SK-N-SH (cell line): ENCODE measurements at regions of chr19 and their contacts with region 1.

Region 1: DNA sequence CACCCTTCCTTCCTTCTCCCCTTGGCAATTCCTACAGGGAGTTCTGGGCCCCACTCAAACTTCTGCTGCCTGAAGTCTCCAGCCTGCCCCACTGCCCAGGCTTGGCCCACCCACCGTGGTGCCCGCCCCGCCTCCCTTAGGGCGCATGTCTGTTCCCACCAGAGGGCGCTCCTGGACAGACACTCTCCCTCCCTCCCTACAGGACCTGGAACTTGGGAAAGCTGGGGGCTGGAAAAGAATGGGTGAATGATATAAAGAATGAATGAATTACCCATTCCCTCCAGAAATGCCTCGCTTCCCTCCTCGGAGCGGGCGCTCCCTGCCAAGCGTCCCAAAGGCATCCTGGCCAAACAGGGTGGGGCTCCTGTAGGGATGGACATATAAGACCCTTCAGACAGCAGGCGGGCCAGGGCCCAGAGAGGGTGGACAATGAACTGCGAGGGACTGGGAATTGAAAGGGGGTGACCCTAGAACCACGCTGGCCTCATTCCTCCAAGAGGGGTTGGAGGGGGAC is 5.3 kb upstream of the EMP3 start:
- DNase-seq: peak; percentile 67
- H3K4me3 ChIP-seq: no peak overlapping the region; a peak in 1 of 4 replicates
- H3K27ac ChIP-seq: no peak overlapping the region
- H3K4me1 ChIP-seq: peaks cover 12 to 24% of the 10 kb centered on the region in 2 experiments
- H3K27me3 ChIP-seq: no peaks in the 10 kb centered on the region
- CTCF ChIP-seq: peak; percentile 73
- EP300 ChIP-seq: no peak
- RAD21 ChIP-seq: peak; percentile 59

Region 2: GRCh38 chr19:48218997-48219396 is 101.1 kb before region 1 on chr19:
- CTCF ChIA-PET with region 1: no interaction called
- POLR2A ChIA-PET with region 1: no interaction called
- DNase-seq: no peak
- H3K4me3 ChIP-seq: no peak overlapping the region
- H3K27ac ChIP-seq: no peak overlapping the region
- H3K4me1 ChIP-seq: no peaks in the 10 kb centered on the region; a peak in 1 of 4 replicates
- H3K27me3 ChIP-seq: no peaks in the 10 kb centered on the region
- CTCF ChIP-seq: no peak
- EP300 ChIP-seq: no peak
- RAD21 ChIP-seq: no peak

Region 3: DNA sequence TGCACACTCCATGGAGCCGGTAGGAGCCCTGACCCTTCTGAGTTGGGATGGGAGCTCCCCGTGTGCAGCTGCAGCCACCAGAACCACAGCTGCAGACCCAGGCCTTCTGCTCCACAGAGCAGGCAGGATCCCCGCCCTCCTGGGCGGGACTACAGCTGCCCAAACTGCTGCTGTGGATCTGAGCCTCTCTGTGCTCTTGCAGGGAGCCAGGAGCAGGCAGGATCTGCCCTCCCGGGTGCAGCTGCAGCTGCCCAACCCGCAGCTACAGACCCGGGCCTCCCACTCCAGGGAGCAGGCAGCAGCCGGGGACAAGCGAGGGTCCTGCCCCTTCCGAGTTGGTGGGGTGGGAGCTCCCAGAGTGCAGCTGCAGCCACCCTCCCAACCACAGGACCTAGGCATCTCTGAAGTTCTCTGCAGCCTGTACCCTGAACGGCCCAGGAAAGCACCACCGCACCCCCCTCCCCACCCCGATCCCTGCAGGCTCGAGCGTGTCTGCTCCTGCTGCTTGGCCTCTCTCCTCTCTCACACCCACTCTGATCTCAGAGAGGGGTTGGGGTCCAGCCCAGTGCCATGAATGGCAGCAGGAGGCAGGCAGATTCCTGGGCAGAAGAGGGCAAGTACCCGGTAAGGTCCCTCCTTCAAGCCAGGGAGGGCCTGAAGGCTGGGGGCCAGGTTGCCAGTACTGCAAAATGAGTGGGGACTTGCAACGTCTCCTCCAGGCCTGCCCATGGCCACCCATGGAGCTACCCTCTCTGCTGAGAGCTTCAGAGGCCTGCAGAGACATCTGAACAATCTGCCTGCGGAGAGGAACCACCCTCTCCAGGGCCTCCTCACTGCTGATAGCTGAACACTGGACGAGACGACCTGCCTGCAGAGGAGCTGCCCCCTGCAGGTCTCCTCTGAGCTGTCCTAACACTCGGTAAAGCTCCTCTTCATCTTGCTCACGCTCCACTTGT is 11.2 kb before region 1 on chr19:
- CTCF ChIA-PET with region 1: interaction called, 10 read pairs
- POLR2A ChIA-PET with region 1: no interaction called
- DNase-seq: no peak
- H3K4me3 ChIP-seq: no peak overlapping the region
- H3K27ac ChIP-seq: no peak overlapping the region
- H3K4me1 ChIP-seq: no peaks in the 10 kb centered on the region
- H3K27me3 ChIP-seq: no peaks in the 10 kb centered on the region
- CTCF ChIP-seq: no peak
- EP300 ChIP-seq: no peak
- RAD21 ChIP-seq: no peak

Region 4: GRCh38 chr19:48333467-48334384 is 13.6 kb after region 1 on chr19:
- CTCF ChIA-PET with region 1: interaction called, 20 read pairs
- POLR2A ChIA-PET with region 1: interaction called, 8 read pairs
- DNase-seq: peak; percentile 84
- H3K4me3 ChIP-seq: peak overlapping the region; percentile 36 to 38; a peak in 3 of 4 replicates
- H3K27ac ChIP-seq: peak overlapping the region; percentile 47 to 88
- H3K4me1 ChIP-seq: peaks cover 9 to 24% of the 10 kb centered on the region in 2 experiments; a peak in 3 of 4 replicates
- H3K27me3 ChIP-seq: no peaks in the 10 kb centered on the region
- CTCF ChIP-seq: peak; percentile 61
- EP300 ChIP-seq: no peak
- RAD21 ChIP-seq: peak; percentile 66